HAP-1 (cell line): ENCODE measurements at regions of chr6 and their contacts with region 1.

Region 1: DNA sequence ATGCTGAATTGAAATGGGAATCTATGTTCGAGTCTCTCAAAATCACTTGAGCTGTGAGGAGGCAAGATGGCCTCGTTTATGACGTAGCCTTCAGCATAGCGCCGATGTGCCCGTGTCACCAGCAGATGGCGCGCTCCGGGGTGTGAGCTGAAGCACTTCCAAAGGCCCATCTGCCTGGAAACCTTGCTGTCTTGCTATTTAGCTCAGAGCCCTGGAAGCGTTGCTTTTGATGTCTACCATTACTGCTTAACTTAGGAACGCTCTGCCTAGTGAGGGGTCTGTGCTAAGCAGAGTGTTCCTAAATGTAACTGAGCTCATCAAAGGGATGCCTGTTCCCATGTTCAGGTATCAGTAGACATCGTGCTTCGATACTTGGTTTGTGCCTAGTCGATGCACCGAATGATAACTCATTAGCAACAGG is 67.7 kb downstream of the SYCP2L start:
- DNase-seq: peak; percentile 59 to 93
- H3K4me3 ChIP-seq: no peak overlapping the region
- H3K4me1 ChIP-seq: no peaks in the 10 kb centered on the region
- H3K27me3 ChIP-seq: no peaks in the 10 kb centered on the region

Region 2: DNA sequence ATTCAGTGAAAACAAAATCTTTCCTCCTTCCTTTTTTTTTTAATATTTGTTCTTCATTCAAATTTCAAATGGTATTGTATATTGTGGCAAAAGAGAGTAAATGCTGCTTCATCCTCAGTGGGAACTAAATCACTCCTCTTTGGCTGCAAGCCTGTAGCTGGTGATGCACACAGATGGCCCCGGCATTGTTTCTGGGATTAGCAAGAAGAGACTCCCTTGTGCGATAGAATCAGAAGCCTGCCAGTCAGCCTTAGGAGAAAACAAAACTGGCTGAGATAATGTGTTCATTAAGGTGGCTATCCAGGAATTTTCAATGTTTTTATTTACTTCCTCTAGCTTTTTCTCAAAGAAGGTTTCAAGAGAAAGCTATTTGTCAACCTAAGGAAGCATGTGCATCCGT is 110.2 kb after region 1 on chr6:
- in situ Hi-C with region 1: loop called (anchors 5 kb)
- DNase-seq: peak; percentile 35 to 60
- H3K4me3 ChIP-seq: no peak overlapping the region
- H3K4me1 ChIP-seq: peaks cover 3% of the 10 kb centered on the region; the same call in 1 of the 2 replicates
- H3K27me3 ChIP-seq: no peaks in the 10 kb centered on the region